HEK293 (cell line): ENCODE measurements at regions of chr6 and their contacts with region 1.

Region 1: DNA sequence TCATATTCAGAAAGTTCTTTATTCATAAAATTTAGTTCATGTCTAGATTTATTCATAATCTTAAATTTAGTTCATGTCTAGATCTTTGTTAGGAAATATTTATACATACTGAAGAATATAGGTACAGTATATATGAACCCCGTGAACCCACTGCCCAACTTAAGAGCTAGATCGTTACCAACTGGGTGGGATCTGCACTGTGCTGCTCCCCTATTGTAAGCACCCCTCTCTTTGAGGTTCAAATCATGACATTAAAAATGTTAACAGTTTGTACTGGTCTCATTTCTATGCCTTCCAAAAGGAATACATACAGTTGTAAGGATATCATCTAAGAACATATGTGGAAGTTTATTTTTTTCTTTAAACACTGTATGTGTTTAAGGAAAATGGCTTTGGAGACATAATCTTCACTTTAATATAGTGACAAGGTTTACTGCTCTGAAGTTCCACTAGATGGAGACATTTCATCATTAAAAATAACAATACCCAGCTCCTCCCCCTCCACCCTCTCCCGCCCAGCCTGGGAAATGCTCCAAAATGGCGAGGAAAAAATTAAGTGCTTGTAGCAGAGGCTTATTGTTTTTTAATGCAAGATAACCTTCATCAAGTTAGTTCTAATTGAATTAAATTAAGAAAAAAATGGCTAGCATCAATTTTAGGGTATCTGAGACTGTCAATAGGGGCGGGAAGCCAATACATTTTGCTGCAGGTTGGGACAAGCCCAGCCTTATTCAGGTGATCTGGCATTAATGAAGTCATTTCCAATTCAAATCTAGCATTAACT is 104.1 kb upstream of the TRAF3IP2 start:
- H3K4me3 ChIP-seq: no peak overlapping the region
- H3K27ac ChIP-seq: no peak overlapping the region
- H3K4me1 ChIP-seq: peaks cover 10% of the 10 kb centered on the region
- CTCF ChIP-seq: peak; percentile 49

Region 2: GRCh38 chr6:111696814-111697213 is 13.0 kb before region 1 on chr6:
- CTCF ChIA-PET with region 1: interaction called, 36 read pairs
- POLR2A ChIA-PET with region 1: no interaction called
- H3K4me3 ChIP-seq: no peak overlapping the region
- H3K27ac ChIP-seq: no peak overlapping the region
- H3K4me1 ChIP-seq: no peaks in the 10 kb centered on the region
- CTCF ChIP-seq: no peak

Region 3: DNA sequence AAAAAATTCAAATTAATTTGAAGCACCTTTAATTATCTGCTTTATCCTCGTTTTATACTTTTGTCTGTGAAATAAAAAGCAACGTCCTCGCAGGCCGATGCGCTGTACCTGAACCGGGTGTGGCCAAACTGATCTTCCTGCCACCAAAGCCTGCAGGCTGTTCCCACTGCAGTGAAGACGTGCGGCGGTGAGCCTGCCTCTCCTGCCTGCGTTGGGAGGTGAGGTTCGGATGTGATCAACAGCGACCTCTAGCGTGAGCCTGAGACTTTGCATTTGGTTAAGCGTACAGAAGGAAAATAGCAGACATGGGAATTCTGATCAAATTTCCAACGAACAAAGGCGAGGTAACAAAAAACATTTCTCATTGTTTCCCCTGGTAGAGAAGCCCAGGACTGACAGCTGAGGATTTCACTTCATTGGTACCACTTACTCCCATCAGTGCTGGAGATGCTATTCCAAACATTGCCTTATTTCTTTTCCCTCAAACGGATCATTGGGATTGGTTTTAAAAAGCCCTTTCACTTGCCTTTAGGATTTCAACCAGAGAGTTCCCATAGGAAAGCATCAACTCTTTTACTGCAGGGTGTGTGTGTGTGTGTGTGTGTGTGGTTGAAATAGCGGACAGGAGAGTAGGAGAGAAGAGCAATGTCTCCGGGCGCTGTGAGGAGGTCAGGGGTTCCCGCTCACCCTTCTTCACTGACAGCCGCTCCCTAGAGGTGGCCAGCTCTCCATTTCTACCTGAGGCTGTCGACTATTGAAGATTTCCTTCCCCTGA is 287.5 kb after region 1 on chr6:
- CTCF ChIA-PET with region 1: interaction called, 23 read pairs
- POLR2A ChIA-PET with region 1: no interaction called
- H3K4me3 ChIP-seq: no peak overlapping the region
- H3K27ac ChIP-seq: no peak overlapping the region
- H3K4me1 ChIP-seq: no peaks in the 10 kb centered on the region
- CTCF ChIP-seq: peak; percentile 83

Region 4: GRCh38 chr6:112029045-112029822 is 319.4 kb after region 1 on chr6:
- CTCF ChIA-PET with region 1: interaction called, 32 read pairs
- POLR2A ChIA-PET with region 1: no interaction called
- H3K4me3 ChIP-seq: no peak overlapping the region
- H3K27ac ChIP-seq: no peak overlapping the region
- H3K4me1 ChIP-seq: no peaks in the 10 kb centered on the region
- CTCF ChIP-seq: peak; percentile 47; the same call in 1 of the 2 replicates

Region 5: GRCh38 chr6:112049026-112049799 is 339.4 kb after region 1 on chr6:
- CTCF ChIA-PET with region 1: interaction called, 139 read pairs
- POLR2A ChIA-PET with region 1: no interaction called
- H3K4me3 ChIP-seq: no peak overlapping the region
- H3K27ac ChIP-seq: no peak overlapping the region
- H3K4me1 ChIP-seq: no peaks in the 10 kb centered on the region
- CTCF ChIP-seq: no peak